ENCODE measurements at regions of chr16 and their contacts with region 1.

Region 1: DNA sequence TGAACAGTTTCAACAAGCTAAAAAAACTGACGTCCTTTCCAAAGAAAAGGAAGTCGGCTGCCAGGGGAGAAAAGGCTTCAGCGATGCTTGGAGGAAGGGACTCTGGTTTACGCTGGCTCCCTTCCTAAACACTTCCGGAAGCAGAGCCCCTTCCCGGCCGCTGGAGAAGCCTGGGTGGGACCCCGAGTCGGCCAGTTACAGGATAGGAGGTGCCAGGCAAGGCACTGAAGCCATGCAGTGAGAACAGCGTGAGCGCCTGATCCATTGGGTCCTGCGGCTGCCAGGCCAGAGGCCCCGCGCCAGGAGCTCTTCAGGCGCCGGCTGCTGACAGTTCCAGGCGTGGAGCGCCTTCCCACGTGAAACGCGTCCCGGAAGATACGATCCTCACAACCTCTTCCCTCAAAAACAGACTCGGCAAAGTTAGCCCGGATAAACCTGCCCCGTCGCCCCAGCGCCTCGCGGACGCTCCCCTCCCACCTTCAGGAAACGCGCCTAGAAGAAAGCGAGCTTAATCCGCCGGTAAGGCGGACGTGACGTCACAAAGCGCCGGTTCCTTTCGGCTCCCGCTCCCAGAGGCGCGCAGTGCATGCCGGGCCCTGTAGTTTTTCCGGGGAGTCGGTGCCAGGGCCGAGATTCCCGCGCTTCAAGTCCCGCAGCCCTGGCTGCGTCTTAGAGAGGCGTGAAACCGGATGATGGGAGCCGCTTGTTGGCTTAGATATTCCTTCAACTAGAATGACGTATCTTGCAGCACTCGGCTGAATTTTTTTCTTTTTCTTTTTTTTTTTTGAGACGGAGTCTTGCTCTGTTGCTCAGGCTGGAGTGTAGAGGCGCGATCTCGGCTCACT is at the start of gene ADAT1:
- DNase-seq: peak; percentile 95 to 100 (median 99)

Region 2: GRCh38 chr16:75432828-75433731 is 189.9 kb before region 1 on chr16 and contains the start of gene CFDP1:
- intact Hi-C with region 1: loop called (anchors 10 kb)
- DNase-seq: peak; percentile 91 to 99 (median 97)

Region 3: GRCh38 chr16:75452464-75453190 is 170.4 kb before region 1 on chr16:
- intact Hi-C with region 1: no loop called
- DNase-seq: peak in 1 of 42 donors; percentile 4

Region 4: DNA sequence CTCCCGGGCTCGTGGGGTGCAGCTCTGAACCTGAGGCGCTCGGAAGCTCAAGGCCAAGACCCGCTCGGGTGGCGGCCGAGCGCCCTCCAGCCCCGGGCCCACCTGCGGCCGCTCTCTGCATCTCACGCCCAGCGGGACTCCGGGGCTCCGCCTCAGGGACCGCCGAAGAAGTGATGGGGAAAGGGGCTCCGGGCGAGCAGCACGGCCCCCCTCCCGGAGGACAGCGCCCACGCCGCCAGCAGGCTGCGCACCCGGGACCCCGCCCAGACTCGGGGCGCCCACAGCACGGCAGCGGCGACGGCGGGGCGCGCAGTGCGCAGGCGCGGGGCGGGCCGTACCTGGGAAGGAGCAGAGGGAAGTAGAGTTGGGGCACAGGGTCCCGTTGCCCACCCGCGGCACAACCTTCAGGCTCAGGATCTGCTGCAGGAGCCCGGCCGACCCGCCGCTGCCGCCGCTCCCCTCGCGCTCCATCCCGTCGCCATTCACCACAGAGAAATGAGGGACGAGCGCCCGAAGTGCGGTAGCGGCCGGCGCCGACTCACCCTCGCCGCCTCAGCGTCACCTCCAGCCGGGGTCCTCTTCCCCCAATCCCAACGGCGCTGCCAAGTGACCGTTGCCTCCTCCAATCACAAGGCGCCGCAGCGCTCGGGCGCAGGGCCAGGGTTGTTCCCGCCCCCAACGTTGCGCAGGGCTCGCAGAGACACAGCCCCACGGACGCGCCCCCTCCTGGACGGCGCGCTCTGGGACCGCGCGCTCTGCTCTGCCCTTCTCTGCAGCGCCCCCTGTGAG is 158.7 kb before region 1 on chr16 and contains the start of gene TMEM170A:
- intact Hi-C with region 1: loop called (anchors 10 kb)
- DNase-seq: peak; percentile 97 to 100 (median 99)

Region 5: DNA sequence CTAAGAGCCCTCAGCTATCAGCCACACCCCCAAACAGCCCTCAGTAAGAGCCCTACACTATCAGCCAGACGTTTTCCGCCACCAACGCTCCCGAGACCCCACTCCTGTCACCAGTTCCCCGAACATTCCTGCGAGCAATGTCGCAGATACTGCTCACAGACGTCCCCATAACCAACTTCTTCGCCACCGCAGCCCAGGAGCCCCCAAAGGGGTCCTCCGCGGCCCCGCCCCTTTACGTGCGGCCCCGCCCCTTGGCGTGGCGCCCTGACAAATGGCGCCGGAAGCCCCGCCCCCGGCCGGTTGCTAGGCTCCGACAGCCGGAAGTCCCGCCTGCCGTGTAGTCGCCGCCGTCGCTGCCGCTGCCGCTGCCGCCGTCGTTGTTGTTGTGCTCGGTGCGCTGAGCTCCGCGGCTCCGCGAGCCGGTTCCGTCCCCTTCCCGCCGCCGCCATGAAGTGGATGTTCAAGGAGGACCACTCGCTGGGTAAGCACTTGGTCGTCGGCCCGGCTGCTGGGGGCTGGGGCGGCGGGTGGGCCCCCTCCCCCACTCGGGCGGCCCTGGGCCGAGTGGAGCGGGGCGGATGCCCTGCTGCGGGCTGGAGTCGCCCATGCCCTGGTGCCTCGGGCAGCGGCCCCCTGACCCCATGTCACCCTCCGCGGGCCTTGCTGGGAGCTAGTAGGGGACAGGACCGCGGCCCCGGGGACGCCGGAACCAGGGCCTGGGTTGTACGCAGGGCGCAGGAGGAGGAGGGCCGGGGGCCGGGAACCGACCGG is 56.8 kb before region 1 on chr16 and contains the start of gene GABARAPL2:
- intact Hi-C with region 1: loop called (anchors 5 kb)
- DNase-seq: peak; percentile 66 to 95 (median 90)

Region 6: DNA sequence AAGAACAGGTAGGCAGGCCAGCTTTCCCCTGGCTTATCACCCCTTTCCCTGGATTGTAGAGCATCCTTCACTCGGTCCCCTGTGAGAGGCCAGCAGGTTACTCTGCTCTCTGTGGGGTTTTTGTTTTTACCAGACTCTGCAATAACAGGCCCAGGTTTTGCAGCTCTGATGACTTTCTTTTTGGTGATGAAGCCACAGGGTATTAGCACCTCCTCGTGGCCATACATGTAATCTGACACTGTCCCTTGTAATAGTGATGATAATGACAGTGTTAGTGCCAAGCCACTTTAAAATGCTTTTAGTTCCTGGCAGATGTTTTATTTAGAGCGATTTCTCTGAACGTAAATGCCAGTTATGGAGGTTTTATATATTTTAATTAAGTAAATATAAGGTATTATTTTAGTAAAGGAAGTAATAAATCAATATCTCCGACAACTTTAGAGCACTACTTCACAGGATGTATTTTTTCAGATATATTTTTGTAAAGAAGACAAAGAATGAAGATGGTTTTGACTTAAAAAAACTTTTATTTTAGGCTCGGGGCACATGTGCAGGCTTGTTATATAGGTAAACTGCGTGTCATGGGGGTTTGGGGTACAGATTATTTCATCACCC is 141.3 kb after region 1 on chr16:
- intact Hi-C with region 1: loop called (anchors 2 kb)
- DNase-seq: peak in 40 of 42 donors; percentile 16 to 87 (median 65)